ENCODE measurements at regions of chr15 and their contacts with region 1.

Region 1: DNA sequence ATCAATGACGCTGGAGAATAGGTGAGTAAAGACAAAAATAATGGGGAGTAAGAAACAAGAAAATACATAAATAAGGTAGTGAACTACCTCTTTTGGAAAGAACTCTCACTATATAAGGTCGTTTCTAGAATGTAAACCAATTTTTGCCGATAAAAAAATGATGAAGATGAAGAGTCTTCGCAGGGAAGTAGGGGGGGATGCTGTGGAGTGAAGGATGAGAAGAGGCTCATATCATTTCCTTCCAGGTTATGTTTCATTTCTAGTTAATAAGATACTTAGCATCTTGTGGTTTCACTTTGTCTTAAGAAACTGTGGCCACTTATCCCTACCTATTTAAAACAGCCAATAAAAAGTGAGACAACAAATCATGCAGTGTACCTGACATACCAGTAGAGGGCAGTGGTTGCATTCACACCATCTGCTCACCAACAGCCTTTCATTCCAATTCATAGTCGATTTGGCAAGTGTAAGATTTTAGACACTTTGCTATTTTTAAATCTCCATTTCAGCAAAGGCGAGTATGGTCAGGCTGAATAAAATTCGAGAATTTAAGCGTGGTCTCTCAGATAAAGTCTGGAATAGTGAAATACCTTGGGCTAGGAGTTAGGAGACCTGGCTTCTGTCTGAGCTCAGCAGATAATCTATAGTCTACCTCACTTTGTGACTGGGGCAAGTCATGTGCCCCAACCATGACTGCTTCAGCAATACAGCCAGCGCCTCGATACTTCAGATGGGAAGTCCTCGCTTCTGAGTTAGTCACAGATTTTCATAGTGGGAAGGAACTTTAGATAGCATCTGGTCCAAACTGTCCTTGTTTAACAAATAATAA is 28.9 kb upstream of the ICE2 start:
- DNase-seq: peak in 7 of 9 donors; percentile 55 to 80 (median 73)
- ATAC-seq: peak; percentile 97
- H3K4me3 ChIP-seq: no peak overlapping the region
- H3K4me3 Mint-ChIP-seq: peak overlapping the region in 5 of 10 donors; percentile 7 to 30 (median 10)
- H3K27ac ChIP-seq: peak overlapping the region; percentile 6
- H3K27ac Mint-ChIP-seq: peak overlapping the region; percentile 38 to 86 (median 55)
- H3K4me1 ChIP-seq: peaks cover 4 to 7% of the 10 kb centered on the region in 2 donors
- H3K4me1 Mint-ChIP-seq: peaks cover 16 to 60% (median 42%) of the 10 kb centered on the region in 7 donors
- H3K27me3 ChIP-seq: no peaks in the 10 kb centered on the region
- H3K27me3 Mint-ChIP-seq: no peaks in the 10 kb centered on the region

Region 2: DNA sequence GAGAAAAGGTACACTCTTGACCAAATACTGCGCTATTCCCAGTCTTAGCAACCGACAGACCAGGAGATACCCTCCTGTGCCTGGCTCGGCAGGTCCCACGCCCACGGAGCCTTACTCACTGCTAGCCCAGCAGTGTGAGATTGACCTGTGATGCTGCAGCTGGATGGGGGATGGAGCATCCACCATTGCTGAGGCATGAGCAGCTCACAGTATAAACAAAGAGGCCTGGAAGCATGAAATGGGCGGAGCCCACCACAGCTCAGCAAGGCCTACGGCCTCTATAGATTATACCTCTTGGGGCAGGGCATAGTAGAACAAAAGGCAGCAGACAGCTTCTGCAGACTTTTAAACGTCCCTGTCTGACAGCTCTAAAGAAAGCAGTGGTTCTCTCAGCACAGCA is 270.4 kb before region 1 on chr15:
- CTCF ChIA-PET with region 1: no interaction called
- POLR2A ChIA-PET with region 1: no interaction called
- intact Hi-C with region 1: no loop called
- DNase-seq: no peak
- ATAC-seq: no peak
- H3K4me3 ChIP-seq: no peak overlapping the region
- H3K4me3 Mint-ChIP-seq: peak overlapping the region in 1 of 10 donors; percentile 26
- H3K27ac ChIP-seq: no peak overlapping the region
- H3K27ac Mint-ChIP-seq: no peak overlapping the region
- H3K4me1 ChIP-seq: no peaks in the 10 kb centered on the region
- H3K4me1 Mint-ChIP-seq: peaks cover 0 to 11% (median 4%) of the 10 kb centered on the region in 7 donors
- H3K27me3 ChIP-seq: no peaks in the 10 kb centered on the region
- H3K27me3 Mint-ChIP-seq: peaks cover 15 to 44% (median 35%) of the 10 kb centered on the region in 5 donors

Region 3: DNA sequence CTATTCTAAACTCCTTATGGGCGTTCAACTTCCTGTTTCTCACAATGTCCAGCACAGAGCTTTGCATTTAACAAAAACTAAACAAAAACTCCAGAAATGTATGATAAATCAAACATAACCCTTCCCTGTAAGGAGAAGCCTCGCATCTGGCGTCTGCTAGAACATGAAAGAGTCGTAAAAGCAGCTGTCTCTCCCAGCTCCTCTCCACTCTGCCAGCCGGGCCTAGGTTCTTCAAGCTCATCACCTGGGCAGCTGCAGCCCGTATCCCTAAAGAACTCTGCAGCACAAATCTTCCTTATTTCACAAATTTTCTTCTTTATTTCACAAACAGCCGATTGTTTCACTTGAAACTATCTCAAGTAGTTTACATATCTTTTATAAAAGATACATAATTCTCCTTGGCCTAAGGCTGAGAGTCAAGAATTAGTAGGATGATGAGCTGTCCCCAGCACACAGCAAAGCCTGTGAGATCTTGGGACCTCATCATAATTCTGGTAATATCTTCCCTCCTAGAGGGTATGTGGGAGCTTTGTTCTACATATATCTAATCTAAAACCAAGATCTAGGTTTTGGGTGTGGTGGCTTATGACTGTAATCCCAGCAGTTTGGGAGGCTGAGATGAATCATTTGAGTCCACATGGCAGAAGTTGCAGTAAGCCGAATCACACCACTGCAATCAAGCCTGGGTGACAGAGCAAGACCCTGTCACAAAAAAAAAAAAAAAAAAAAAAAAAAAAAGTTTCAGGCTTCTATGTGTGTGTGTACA is 145.3 kb before region 1 on chr15:
- CTCF ChIA-PET with region 1: interaction called, 6 read pairs
- POLR2A ChIA-PET with region 1: no interaction called
- intact Hi-C with region 1: loop called (anchors 1 to 2 kb)
- DNase-seq: peak in 1 of 9 donors; percentile 46
- ATAC-seq: peak; percentile 31
- H3K4me3 ChIP-seq: no peak overlapping the region
- H3K4me3 Mint-ChIP-seq: peak overlapping the region in 1 of 10 donors; percentile 54
- H3K27ac ChIP-seq: no peak overlapping the region
- H3K27ac Mint-ChIP-seq: peak overlapping the region in 3 of 9 donors; percentile 47 to 81 (median 78)
- H3K4me1 ChIP-seq: peaks cover 0 to 7% of the 10 kb centered on the region in 2 donors
- H3K4me1 Mint-ChIP-seq: peaks cover 6 to 39% (median 12%) of the 10 kb centered on the region in 7 donors
- H3K27me3 ChIP-seq: no peaks in the 10 kb centered on the region
- H3K27me3 Mint-ChIP-seq: no peaks in the 10 kb centered on the region

Region 4: GRCh38 chr15:60548101-60548500 is 40.3 kb after region 1 on chr15:
- CTCF ChIA-PET with region 1: interaction called, 4 read pairs
- POLR2A ChIA-PET with region 1: interaction called, 3 read pairs
- intact Hi-C with region 1: loop called (anchors 1 to 2 kb)
- DNase-seq: peak in 8 of 9 donors; percentile 26 to 64 (median 40)
- ATAC-seq: peak; percentile 69
- H3K4me3 ChIP-seq: peak overlapping the region; percentile 6
- H3K4me3 Mint-ChIP-seq: peak overlapping the region; percentile 53 to 84 (median 70)
- H3K27ac ChIP-seq: peak overlapping the region; percentile 28
- H3K27ac Mint-ChIP-seq: peak overlapping the region; percentile 77 to 96 (median 88)
- H3K4me1 ChIP-seq: peaks cover 47 to 69% of the 10 kb centered on the region in 2 donors
- H3K4me1 Mint-ChIP-seq: peaks cover 63 to 96% (median 93%) of the 10 kb centered on the region in 7 donors
- H3K27me3 ChIP-seq: no peaks in the 10 kb centered on the region
- H3K27me3 Mint-ChIP-seq: no peaks in the 10 kb centered on the region

Region 5: GRCh38 chr15:60865507-60865906 is 357.7 kb after region 1 on chr15:
- CTCF ChIA-PET with region 1: interaction called, 11 read pairs
- POLR2A ChIA-PET with region 1: no interaction called
- intact Hi-C with region 1: loop called in 1 of 2 experiments (anchors 1 kb)
- DNase-seq: no peak
- ATAC-seq: no peak
- H3K4me3 ChIP-seq: no peak overlapping the region
- H3K4me3 Mint-ChIP-seq: no peak overlapping the region
- H3K27ac ChIP-seq: no peak overlapping the region
- H3K27ac Mint-ChIP-seq: peak overlapping the region in 1 of 9 donors; percentile 46
- H3K4me1 ChIP-seq: peaks cover 3 to 6% of the 10 kb centered on the region in 2 donors
- H3K4me1 Mint-ChIP-seq: peaks cover 2 to 22% (median 16%) of the 10 kb centered on the region in 7 donors
- H3K27me3 ChIP-seq: no peaks in the 10 kb centered on the region
- H3K27me3 Mint-ChIP-seq: peaks cover 0 to 8% (median 0%) of the 10 kb centered on the region in 5 donors

Region 6: DNA sequence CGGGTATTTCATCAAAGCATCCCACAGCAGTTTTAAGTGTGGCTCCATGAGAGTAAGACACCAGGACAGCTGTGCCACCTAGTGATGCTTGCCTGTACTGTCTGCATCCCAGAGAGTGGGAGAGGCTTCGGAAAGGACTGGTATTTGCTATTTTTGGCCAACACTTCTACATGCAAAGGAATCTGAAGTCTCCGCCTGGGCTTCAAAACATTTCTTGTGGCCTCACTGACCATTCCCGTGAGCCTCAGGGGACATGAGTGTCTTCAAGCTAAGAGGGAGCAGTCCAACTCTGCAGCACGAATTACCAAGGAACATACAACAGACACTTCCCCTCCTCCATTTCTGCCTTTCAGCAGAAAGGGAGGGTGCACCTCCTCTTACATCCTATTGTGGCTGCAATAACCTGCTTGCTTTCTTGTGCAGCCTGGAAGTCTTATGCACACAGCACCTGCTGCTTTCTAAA is 543.8 kb after region 1 on chr15:
- CTCF ChIA-PET with region 1: interaction called, 3 read pairs
- POLR2A ChIA-PET with region 1: no interaction called
- intact Hi-C with region 1: loop called in 1 of 2 experiments (anchors 10 kb)
- DNase-seq: no peak
- ATAC-seq: no peak
- H3K4me3 ChIP-seq: no peak overlapping the region
- H3K4me3 Mint-ChIP-seq: no peak overlapping the region
- H3K27ac ChIP-seq: no peak overlapping the region
- H3K27ac Mint-ChIP-seq: no peak overlapping the region
- H3K4me1 ChIP-seq: no peaks in the 10 kb centered on the region
- H3K4me1 Mint-ChIP-seq: no peaks in the 10 kb centered on the region
- H3K27me3 ChIP-seq: no peaks in the 10 kb centered on the region
- H3K27me3 Mint-ChIP-seq: peaks cover 4 to 32% (median 9%) of the 10 kb centered on the region in 5 donors

Measured in naive thymus-derived CD4-positive, alpha-beta T cell (primary cell).